Body of pancreas (tissue), 4 donors: ENCODE measurements at regions of chr14 and their contacts with region 1.

Region 1: DNA sequence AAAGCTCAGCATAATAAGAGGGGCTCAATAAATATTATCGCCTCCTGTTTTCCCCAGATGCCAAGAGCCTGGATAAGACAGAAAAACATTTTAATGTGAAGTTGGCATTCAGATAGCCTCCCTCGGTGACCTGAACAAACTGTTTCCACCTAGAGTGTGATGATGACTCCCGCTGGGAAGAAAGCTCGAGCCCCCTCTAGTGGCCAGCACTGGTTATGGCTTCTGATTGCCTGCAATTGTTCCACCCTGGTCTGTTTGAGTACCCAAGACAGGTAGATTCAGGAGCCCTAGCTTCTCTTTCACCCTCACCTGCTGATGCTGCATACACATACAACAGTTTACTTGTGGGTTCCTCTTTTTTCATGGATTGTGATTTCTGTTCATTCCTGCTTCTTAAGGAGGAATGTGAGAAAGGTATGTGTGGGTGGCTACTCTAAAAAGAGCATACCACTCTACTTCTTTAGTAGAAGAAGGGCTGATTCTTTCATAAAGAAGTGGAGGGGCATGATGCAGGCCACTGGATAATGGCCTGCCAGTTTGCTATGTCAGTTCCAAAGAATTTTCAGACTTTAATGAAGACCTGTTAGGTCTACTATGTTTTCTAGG is 6.4 kb downstream of the ERG28 start:
- DNase-seq: peak; percentile 81 to 87 (median 85)
- ATAC-seq: peak; percentile 90
- H3K4me3 ChIP-seq: no peak overlapping the region
- H3K27ac ChIP-seq: no peak overlapping the region
- H3K4me1 ChIP-seq: peaks cover 4% of the 10 kb centered on the region
- H3K27me3 ChIP-seq: no peaks in the 10 kb centered on the region
- CTCF ChIP-seq: peak; percentile 90 to 93 (median 92)
- POLR2A ChIP-seq: no peak

Region 2: DNA sequence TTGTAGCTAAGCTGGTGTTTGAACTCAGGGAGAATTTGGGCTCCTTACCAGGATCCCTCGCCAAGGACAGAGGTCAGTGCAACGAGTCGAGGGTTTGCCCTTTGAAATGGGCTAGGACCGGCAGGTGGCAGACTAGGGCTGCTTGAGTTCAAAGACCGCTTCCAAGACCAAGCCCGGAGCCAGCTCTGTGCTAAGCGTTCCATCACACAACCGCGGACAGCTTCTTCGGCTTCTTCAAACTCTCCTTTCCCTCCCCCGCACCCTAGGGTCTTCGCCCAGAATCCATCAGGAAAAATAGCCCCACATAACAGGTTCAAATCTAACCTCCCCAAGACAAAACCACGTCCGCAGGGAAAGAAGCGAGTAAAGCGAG is 76.5 kb before region 1 on chr14:
- intact Hi-C with region 1: loop called (anchors 5 kb)
- DNase-seq: peak; percentile 85 to 91 (median 89)
- ATAC-seq: peak; percentile 90
- H3K4me3 ChIP-seq: peak overlapping the region; percentile 10 to 41
- H3K27ac ChIP-seq: peak overlapping the region in 3 of 4 donors; percentile 55 to 81 (median 68)
- H3K4me1 ChIP-seq: peaks cover 18% of the 10 kb centered on the region
- H3K27me3 ChIP-seq: no peaks in the 10 kb centered on the region
- CTCF ChIP-seq: peak; percentile 63 to 81 (median 78)
- POLR2A ChIP-seq: no peak